ENCODE measurements at regions of chr17 and their contacts with region 1.

Region 1: GRCh38 chr17:74961657-74962490 is 10.7 kb downstream of the HID1 start:
- DNase-seq: peak; percentile 91
- H3K4me3 ChIP-seq: no peak overlapping the region
- H3K27ac ChIP-seq: no peak overlapping the region
- H3K4me1 ChIP-seq: no peaks in the 10 kb centered on the region
- H3K27me3 ChIP-seq: no peaks in the 10 kb centered on the region
- CTCF ChIP-seq: peak; percentile 75

Region 2: DNA sequence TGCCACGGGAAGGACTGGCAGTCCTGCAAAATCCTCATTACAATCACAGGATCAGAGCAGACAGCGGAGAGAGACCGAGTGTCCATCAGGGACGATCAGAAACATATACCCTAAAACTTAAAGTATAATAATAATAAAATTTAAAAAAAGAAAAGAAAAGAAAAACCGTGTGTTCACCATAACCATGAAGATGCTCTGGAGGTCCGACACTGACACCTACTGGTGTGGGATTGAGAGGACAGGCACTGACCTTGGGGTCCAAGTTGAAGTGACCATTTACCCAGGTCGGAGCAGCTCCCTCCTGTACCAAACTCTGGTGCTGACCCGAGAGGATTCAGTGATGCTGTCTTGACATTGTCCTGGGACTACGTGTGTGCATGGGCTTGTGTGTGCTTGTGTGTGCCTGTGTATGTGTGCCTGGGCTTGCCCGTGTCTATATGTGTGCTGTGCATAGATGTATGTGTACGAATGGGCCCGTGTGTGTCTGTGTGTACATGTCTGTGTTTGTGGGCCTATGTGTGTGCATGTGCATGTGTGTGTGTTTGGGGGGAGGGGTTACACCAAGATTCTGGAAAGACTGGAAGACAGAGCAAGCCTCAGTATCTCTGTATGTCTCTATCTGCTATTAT is 359.8 kb before region 1 on chr17:
- CTCF ChIA-PET with region 1: no interaction called
- POLR2A ChIA-PET with region 1: no interaction called
- intact Hi-C with region 1: no loop called
- DNase-seq: peak; percentile 18
- H3K4me3 ChIP-seq: no peak overlapping the region
- H3K27ac ChIP-seq: no peak overlapping the region
- H3K4me1 ChIP-seq: no peaks in the 10 kb centered on the region
- H3K27me3 ChIP-seq: peaks cover 29% of the 10 kb centered on the region
- CTCF ChIP-seq: peak; percentile 64

Region 3: GRCh38 chr17:74748529-74749365 is 213.1 kb before region 1 on chr17 and contains the start of gene NHERF1:
- CTCF ChIA-PET with region 1: interaction called, 3 read pairs
- POLR2A ChIA-PET with region 1: no interaction called
- intact Hi-C with region 1: loop called (anchors 10 kb)
- DNase-seq: peak; percentile 95
- H3K4me3 ChIP-seq: peak within 1 kb of the TSS; percentile 80
- H3K27ac ChIP-seq: peak within 1 kb of the TSS; percentile 52
- H3K4me1 ChIP-seq: peaks cover 11% of the 10 kb centered on the region
- H3K27me3 ChIP-seq: no peaks in the 10 kb centered on the region
- CTCF ChIP-seq: no peak; the same call in 1 of the 2 replicates
- total RNA-seq, gene NHERF1: 33.8 and 47.9 TPM in 2 replicates

Region 4: GRCh38 chr17:74923533-74924249 is 38.2 kb before region 1 on chr17:
- CTCF ChIA-PET with region 1: interaction called, 15 read pairs
- POLR2A ChIA-PET with region 1: no interaction called
- intact Hi-C with region 1: loop called (anchors 1 kb)
- DNase-seq: peak; percentile 60
- H3K4me3 ChIP-seq: peak overlapping the region; percentile 31
- H3K27ac ChIP-seq: no peak overlapping the region
- H3K4me1 ChIP-seq: peaks cover 14% of the 10 kb centered on the region
- H3K27me3 ChIP-seq: peaks cover 62% of the 10 kb centered on the region
- CTCF ChIP-seq: peak; percentile 91

Region 5: GRCh38 chr17:75012346-75013091 is 50.6 kb after region 1 on chr17 and contains the start of gene MRPL58:
- CTCF ChIA-PET with region 1: interaction called, 24 read pairs
- POLR2A ChIA-PET with region 1: no interaction called
- intact Hi-C with region 1: no loop called
- DNase-seq: peak; percentile 94
- H3K4me3 ChIP-seq: peak within 1 kb of the TSS; percentile 63
- H3K27ac ChIP-seq: peak within 1 kb of the TSS; percentile 66
- H3K4me1 ChIP-seq: peaks cover 18% of the 10 kb centered on the region
- H3K27me3 ChIP-seq: no peaks in the 10 kb centered on the region
- CTCF ChIP-seq: peak; percentile 57
- total RNA-seq, gene MRPL58: 59.9 and 61.4 TPM in 2 replicates

Region 6: DNA sequence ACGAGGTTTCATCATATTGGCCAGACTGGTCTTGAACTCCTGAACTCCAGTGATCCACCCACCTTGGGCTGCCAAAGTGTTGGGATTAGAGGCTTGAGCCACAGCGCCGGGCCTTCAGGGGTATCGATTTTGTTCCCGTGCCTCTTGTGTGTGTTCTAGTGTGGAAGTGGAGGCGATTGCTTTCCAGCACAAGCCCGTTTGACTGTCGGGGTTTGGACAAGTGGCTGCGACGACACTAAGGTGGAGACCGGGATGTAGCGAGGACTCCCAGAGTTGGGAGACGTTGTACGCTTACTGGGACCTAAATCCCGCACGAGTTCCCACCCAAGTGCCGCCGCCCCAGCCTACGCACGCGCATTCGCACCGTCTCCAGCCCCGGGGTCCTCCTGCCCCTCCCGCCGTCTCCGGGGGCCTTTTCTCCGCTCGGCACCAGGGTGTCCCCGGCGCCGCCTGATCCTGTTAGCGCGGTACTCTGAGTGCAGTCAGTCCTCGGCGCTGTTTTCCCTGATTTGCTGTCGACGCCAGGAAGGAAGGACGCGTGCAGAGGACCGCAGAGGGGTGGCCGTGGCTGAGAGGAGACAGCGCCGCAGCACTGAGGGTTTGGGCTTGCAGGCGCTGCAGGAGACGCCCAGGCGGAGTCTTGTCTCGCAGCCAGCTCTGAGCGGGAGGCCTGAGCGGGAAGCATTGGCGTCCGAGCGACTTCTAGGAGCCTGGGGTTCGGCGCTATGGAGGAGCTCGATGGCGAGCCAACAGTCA is 243.3 kb after region 1 on chr17 and contains the start of gene NUP85:
- CTCF ChIA-PET with region 1: interaction called, 11 read pairs
- POLR2A ChIA-PET with region 1: no interaction called
- intact Hi-C with region 1: no loop called
- DNase-seq: peak; percentile 98
- H3K4me3 ChIP-seq: peak within 1 kb of the TSS; percentile 76
- H3K27ac ChIP-seq: peak within 1 kb of the TSS; percentile 100
- H3K4me1 ChIP-seq: peaks cover 4% of the 10 kb centered on the region
- H3K27me3 ChIP-seq: no peaks in the 10 kb centered on the region
- CTCF ChIP-seq: no peak
- total RNA-seq, gene NUP85: 140 and 156 TPM in 2 replicates